ENCODE measurements at regions of chr15 and their contacts with region 1.

Region 1: GRCh38 chr15:52179278-52180195 is 11.7 kb downstream of the GNB5 start:
- DNase-seq: peak; percentile 89
- ATAC-seq: peak; percentile 87
- H3K4me3 Mint-ChIP-seq: peak overlapping the region; percentile 94
- H3K27ac Mint-ChIP-seq: peak overlapping the region; percentile 96
- H3K4me1 Mint-ChIP-seq: peaks cover 31% of the 10 kb centered on the region
- H3K27me3 Mint-ChIP-seq: peaks cover 22% of the 10 kb centered on the region
- CTCF ChIP-seq: no peak

Region 2: DNA sequence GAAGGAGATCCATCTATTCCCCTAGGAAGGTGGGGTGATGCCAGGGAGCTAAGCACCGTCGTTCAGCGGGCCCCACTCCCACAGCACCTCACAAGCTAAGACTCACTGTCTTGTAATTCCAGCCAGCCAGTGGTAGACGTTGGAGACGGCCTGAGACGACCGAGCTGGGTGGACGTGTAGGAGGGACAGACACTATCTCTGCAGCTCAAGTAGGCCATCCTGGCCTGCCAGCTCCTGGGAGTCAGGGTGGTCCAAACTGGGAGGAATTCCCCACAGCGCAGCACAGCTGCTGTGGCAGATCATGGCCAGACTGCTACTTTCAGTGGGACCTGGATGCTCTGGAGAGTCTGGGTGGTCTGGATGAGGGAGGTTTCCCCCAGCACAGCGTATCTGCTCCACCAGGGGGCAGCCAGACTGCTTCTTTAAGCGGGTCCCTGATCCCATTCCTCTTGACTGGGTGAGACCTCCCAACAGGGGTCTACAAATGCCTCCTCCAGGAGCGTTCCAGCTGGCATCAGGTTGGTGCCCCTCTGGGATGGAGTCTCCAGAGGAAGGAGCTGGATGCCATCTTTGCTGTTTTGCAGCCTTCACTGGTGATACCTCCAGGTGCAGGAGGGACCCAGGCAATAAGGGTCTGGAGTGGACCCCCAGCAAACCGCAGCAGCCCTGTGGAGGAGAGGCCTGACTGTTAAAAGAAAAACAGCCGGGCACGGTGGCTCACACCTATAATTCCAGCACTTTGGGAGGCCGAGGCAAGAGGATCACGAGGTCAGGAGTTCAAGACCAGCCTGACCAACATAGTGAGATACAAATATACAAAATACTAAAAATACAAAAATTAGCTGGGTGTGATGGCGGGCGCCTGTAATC is 16.0 kb before region 1 on chr15:
- CTCF ChIA-PET with region 1: interaction called, 37 read pairs
- POLR2A ChIA-PET with region 1: interaction called, 23 read pairs
- DNase-seq: peak; percentile 80
- ATAC-seq: peak; percentile 97
- H3K4me3 Mint-ChIP-seq: no peak overlapping the region
- H3K27ac Mint-ChIP-seq: no peak overlapping the region
- H3K4me1 Mint-ChIP-seq: peaks cover 7% of the 10 kb centered on the region; the same call in 1 of the 2 replicates
- H3K27me3 Mint-ChIP-seq: no peaks in the 10 kb centered on the region
- CTCF ChIP-seq: peak; percentile 44

Region 3: DNA sequence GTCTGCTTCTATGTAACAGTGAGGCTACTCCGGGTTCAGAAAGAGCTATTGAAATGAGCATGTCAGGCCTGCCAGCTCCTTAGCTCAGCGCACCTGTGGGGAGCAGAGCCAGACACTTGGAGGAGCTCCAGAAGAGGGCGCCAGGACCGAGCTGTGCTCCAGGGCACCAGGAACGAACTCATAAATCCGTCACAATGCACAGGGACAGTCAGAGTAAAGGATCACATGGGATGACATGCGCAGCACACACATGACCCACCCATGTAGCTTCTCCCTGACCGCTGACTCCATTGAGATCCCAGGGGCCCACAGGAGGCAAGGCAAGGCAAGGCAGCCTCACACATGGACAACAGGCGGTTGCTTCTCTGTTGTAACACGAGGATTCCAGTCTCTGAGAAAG is 37.6 kb after region 1 on chr15:
- CTCF ChIA-PET with region 1: interaction called, 23 read pairs
- POLR2A ChIA-PET with region 1: no interaction called
- DNase-seq: peak; percentile 68
- ATAC-seq: peak; percentile 98
- H3K4me3 Mint-ChIP-seq: no peak overlapping the region
- H3K27ac Mint-ChIP-seq: no peak overlapping the region
- H3K4me1 Mint-ChIP-seq: no peaks in the 10 kb centered on the region
- H3K27me3 Mint-ChIP-seq: no peaks in the 10 kb centered on the region
- CTCF ChIP-seq: no peak; the same call in 1 of the 2 replicates